Activated CD8-positive, alpha-beta T cell treated with anti-CD3 and anti-CD28 coated beads for 36 hours (primary cell): ENCODE measurements at regions of chr1 and their contacts with region 1.

Region 1: DNA sequence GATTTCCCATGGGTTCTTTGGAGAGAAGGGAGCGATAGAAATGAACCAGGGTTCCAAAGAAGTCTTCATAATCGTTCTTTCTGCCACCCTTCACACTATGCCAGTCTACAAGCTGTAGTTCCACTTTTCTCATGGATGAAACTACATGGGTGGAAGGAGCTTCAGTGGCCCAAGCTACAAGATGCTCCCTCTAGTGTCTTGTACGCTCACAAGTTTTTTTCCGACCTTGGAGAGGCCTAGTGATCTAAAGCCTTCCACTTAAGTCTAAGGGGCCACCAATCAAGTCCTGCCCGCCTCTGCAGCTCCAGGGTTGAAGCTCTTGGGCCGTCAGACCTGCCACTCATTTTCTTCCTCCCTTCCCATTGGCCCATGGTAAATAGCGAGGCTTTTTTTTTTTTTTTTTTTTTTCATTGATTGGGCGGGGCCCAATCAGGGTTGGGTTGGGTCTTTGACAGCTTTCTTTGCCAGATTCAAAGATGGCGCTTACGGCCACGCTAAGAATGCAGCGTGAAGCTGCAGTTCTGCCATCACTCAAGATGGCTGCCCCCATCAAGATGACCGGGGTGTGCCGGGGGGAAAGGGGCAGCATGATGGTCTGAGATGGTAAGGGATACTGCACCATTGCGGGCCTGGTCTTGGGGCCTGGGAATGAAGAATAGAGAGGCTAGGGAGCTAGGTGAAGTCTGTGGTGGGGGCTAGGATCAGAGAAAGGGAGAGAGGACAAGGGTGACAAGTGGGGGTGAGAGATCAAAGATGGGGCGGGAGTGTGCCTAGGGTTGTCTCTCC is at the start of gene TOMM40L:
- DNase-seq: peak; percentile 96
- ATAC-seq: peak; percentile 96
- H3K4me3 Mint-ChIP-seq: peak within 1 kb of the TSS; percentile 98
- H3K27ac Mint-ChIP-seq: peak within 1 kb of the TSS; percentile 95
- H3K4me1 Mint-ChIP-seq: peaks cover 32% of the 10 kb centered on the region
- H3K27me3 Mint-ChIP-seq: no peaks in the 10 kb centered on the region
- CTCF ChIP-seq: peak; percentile 62
- total RNA-seq, gene TOMM40L: 11.6 to 12.1 TPM

Region 2: GRCh38 chr1:161185282-161185682 is 40.4 kb before region 1 on chr1:
- CTCF ChIA-PET with region 1: interaction called, 14 read pairs
- POLR2A ChIA-PET with region 1: interaction called, 6 read pairs
- intact Hi-C with region 1: no loop called
- DNase-seq: peak; percentile 89
- ATAC-seq: peak; percentile 74
- H3K4me3 Mint-ChIP-seq: peak overlapping the region; percentile 48
- H3K27ac Mint-ChIP-seq: peak overlapping the region; percentile 95
- H3K4me1 Mint-ChIP-seq: peaks cover 74% of the 10 kb centered on the region
- H3K27me3 Mint-ChIP-seq: no peaks in the 10 kb centered on the region
- CTCF ChIP-seq: no peak

Region 3: DNA sequence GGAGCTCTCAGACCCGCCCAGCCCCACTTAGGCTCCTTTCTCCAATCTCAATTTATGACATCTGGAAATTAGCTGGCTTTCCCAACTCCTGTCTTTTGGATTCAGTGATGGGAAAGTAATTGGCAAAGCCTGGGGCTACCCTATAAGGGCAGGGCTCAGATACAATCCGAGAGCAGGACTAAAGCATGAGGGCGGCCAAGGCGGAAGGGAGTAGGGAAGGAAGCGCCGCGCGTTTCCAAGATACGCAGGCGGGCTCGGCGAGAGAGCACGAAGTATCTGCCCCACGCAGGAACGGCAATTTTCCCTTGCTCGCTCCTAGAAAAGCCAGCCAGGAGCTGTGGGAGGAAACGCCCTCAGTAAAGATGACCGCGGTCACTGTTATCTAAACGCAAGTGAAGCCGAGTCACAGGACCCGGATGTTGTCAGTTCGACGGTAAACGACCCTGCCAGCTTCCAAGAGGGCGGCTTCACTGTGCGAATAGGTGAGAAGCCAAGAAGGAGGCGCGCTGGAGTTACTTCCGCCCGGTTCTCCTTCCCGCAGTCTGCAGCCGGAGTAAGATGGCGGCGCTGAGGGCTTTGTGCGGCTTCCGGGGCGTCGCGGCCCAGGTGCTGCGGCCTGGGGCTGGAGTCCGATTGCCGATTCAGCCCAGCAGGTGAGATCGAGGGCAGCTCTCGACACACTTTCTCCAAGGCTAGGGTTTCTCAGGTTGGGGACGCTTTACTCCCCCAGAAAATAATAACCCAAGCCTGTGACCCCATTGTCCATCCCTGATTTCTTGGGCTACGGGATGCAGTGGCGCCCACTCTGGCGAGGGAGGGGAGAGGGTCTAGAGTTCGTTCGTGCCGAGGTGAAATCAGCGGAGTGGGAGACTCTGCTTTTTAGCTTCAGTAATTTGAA is 23.6 kb before region 1 on chr1 and contains the start of gene NDUFS2:
- CTCF ChIA-PET with region 1: interaction called, 306 read pairs
- POLR2A ChIA-PET with region 1: interaction called, 82 read pairs
- intact Hi-C with region 1: no loop called
- DNase-seq: peak; percentile 99
- ATAC-seq: peak; percentile 97
- H3K4me3 Mint-ChIP-seq: peak within 1 kb of the TSS; percentile 89
- H3K27ac Mint-ChIP-seq: peak within 1 kb of the TSS; percentile 96
- H3K4me1 Mint-ChIP-seq: peaks cover 57% of the 10 kb centered on the region
- H3K27me3 Mint-ChIP-seq: no peaks in the 10 kb centered on the region
- CTCF ChIP-seq: no peak
- total RNA-seq, gene NDUFS2: 85.9 to 97.1 TPM

Region 4: DNA sequence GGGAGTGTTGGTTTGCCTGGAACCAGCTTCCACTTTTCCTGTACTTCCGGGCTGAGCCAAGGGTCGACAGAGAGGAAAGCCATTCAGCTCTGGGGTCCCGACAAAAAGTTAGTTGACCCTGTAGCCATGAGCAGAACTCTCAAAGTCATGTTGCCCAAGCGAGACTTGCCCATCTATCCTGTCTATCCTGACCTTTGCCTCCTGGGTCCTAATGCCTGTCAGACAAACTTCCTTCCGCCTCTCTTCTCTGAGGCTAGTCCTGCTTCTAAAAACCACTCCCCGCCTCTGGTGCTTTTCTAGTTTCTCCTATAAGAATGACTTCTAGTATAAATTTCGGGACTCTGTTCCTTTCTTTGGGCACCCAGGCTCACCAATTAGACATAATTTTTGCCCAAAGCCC is 25.1 kb after region 1 on chr1:
- CTCF ChIA-PET with region 1: interaction called, 22 read pairs
- POLR2A ChIA-PET with region 1: interaction called, 3 read pairs
- intact Hi-C with region 1: no loop called
- DNase-seq: no peak
- ATAC-seq: no peak
- H3K4me3 Mint-ChIP-seq: no peak overlapping the region
- H3K27ac Mint-ChIP-seq: no peak overlapping the region
- H3K4me1 Mint-ChIP-seq: no peaks in the 10 kb centered on the region
- H3K27me3 Mint-ChIP-seq: peaks cover 4% of the 10 kb centered on the region
- CTCF ChIP-seq: no peak

Region 5: GRCh38 chr1:161292631-161293030 is 66.9 kb after region 1 on chr1:
- CTCF ChIA-PET with region 1: interaction called, 89 read pairs
- POLR2A ChIA-PET with region 1: interaction called, 4 read pairs
- intact Hi-C with region 1: loop called (anchors 5 kb)
- DNase-seq: no peak
- ATAC-seq: no peak
- H3K4me3 Mint-ChIP-seq: no peak overlapping the region
- H3K27ac Mint-ChIP-seq: no peak overlapping the region
- H3K4me1 Mint-ChIP-seq: no peaks in the 10 kb centered on the region
- H3K27me3 Mint-ChIP-seq: no peaks in the 10 kb centered on the region
- CTCF ChIP-seq: no peak

Region 6: GRCh38 chr1:161367684-161368400 is 142.1 kb after region 1 on chr1 and contains the start of gene CFAP126:
- CTCF ChIA-PET with region 1: interaction called, 10 read pairs
- POLR2A ChIA-PET with region 1: interaction called, 4 read pairs
- intact Hi-C with region 1: no loop called
- DNase-seq: peak; percentile 66
- ATAC-seq: peak; percentile 99
- H3K4me3 Mint-ChIP-seq: no peak within 1 kb of the TSS
- H3K27ac Mint-ChIP-seq: peak within 1 kb of the TSS; percentile 50
- H3K4me1 Mint-ChIP-seq: peaks cover 17% of the 10 kb centered on the region
- H3K27me3 Mint-ChIP-seq: no peaks in the 10 kb centered on the region
- CTCF ChIP-seq: peak; percentile 33
- total RNA-seq, gene CFAP126: not detected

Region 7: GRCh38 chr1:161382214-161383019 is 156.7 kb after region 1 on chr1:
- CTCF ChIA-PET with region 1: interaction called, 165 read pairs
- POLR2A ChIA-PET with region 1: interaction called, 7 read pairs
- intact Hi-C with region 1: loop called (anchors 2 kb)
- DNase-seq: no peak
- ATAC-seq: peak; percentile 87
- H3K4me3 Mint-ChIP-seq: no peak overlapping the region
- H3K27ac Mint-ChIP-seq: no peak overlapping the region
- H3K4me1 Mint-ChIP-seq: peaks cover 16% of the 10 kb centered on the region
- H3K27me3 Mint-ChIP-seq: no peaks in the 10 kb centered on the region
- CTCF ChIP-seq: peak; percentile 84